Naive thymus-derived CD4-positive, alpha-beta T cell (primary cell): ENCODE measurements at regions of chr2 and their contacts with region 1.

Region 1: DNA sequence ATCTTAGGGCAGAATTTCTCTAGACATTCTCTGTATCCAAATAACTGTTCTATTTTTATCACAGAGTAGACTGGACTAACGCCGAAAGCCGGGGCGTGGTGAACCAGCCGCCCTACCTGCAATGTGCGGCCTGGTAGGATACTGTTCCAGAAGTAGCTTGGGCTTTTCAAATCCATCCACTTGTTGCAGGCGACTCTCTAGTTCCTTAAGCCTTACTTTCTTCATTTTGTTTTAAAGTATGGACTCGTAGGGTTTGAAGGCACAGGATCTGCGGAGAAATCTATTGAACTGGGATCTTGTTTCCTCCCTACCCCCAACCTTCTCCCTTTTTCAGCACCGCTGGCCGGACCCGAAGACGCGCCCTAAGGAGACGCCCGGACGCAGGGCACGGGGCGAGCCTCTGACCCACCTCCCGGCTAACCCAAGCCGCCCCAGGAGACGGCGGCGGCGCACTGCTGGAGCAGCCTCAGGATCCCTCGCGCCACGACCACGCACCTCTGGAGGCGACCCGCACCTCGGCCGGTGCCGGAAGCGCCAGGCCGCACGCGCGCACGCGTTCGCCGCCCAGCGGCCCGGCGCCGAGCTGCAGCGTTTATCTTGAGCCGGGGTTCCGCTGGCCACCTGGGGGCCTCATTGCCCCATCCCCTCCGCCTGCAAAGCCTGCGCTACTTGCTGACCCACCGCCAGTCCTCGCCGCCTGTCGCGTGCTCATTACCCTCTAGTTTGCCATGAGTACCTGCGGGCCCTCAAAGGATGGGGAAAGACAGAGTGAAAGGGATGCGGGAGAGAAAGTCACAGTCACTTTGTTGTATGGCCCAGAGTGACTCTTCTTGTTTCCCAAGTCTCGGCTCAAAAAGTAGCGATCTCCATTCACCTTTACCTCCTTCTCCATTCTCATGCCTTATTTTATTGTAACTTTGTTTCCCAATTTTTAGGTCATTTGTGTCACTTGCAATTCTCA is at the start of gene METTL5:
- DNase-seq: peak; percentile 55 to 90 (median 71)
- ATAC-seq: peak; percentile 80
- H3K4me3 ChIP-seq: peak within 1 kb of the TSS; percentile 80
- H3K4me3 Mint-ChIP-seq: peak within 1 kb of the TSS; percentile 82 to 99 (median 91)
- H3K27ac ChIP-seq: peak within 1 kb of the TSS; percentile 85
- H3K27ac Mint-ChIP-seq: peak within 1 kb of the TSS; percentile 84 to 96 (median 89)
- H3K4me1 ChIP-seq: peaks cover 19 to 28% of the 10 kb centered on the region in 2 donors
- H3K4me1 Mint-ChIP-seq: peaks cover 46 to 75% (median 65%) of the 10 kb centered on the region in 7 donors
- H3K27me3 ChIP-seq: no peaks in the 10 kb centered on the region
- H3K27me3 Mint-ChIP-seq: no peaks in the 10 kb centered on the region
- total RNA-seq, gene METTL5: 21.1 to 52.9 (median 44.2) TPM

Region 2: GRCh38 chr2:169479257-169480078 is 345.2 kb before region 1 on chr2 and contains the start of gene BBS5:
- CTCF ChIA-PET with region 1: no interaction called
- POLR2A ChIA-PET with region 1: no interaction called
- intact Hi-C with region 1: loop called in 1 of 2 experiments (anchors 2 kb)
- DNase-seq: peak; percentile 55 to 78 (median 74)
- ATAC-seq: peak; percentile 93
- H3K4me3 ChIP-seq: peak within 1 kb of the TSS; percentile 87
- H3K4me3 Mint-ChIP-seq: peak within 1 kb of the TSS; percentile 89 to 96 (median 92)
- H3K27ac ChIP-seq: peak within 1 kb of the TSS; percentile 49
- H3K27ac Mint-ChIP-seq: peak within 1 kb of the TSS; percentile 37 to 86 (median 69)
- H3K4me1 ChIP-seq: peaks cover 0 to 3% of the 10 kb centered on the region in 2 donors
- H3K4me1 Mint-ChIP-seq: peaks cover 12 to 30% (median 22%) of the 10 kb centered on the region in 7 donors
- H3K27me3 ChIP-seq: no peaks in the 10 kb centered on the region
- H3K27me3 Mint-ChIP-seq: no peaks in the 10 kb centered on the region
- total RNA-seq, gene BBS5: 2.0 to 3.8 (median 2.6) TPM

Region 3: DNA sequence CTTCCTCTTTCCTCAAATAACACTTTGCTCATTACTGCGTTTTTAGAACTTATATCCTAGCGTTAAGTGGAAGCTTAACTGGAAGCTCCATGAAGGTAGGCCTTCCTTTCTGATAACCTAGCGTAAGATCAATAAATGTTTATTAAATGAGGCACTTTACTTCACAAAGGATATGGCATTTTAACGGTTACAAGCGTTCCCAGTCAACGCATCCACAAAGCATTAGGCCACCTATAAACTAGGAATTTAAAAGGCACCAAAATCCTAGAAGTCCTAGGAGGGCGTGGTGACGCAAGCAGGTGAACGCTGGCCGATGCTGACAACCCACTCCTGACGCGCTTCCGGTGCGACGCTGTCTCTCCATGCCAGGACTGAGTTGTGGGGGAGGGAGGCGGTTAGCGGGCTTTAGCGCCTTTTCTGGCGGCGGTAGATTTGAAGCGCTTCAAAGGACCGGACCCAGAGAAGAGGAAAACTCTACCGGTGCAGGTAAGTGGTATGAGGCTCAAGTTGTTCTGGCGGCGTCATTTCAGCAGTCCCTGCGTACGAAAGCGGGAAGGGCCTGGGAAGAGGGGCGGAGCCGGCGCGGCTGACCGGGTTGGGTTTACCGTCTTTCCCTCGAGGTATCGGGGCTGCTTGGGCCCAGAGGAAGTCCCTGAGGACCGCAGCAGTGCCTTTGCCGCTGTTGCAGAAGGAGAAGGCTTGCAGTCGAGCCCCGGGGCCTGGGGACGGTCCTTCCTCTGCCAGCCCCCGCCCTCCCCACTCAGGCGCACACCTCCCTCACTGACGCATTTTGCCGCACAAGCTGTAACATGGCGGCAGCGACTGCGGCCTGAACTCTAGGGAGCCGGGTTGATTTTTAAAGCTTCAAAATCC is 240.4 kb before region 1 on chr2 and contains the start of gene PPIG:
- CTCF ChIA-PET with region 1: no interaction called
- POLR2A ChIA-PET with region 1: interaction called, 9 read pairs
- intact Hi-C with region 1: loop called (anchors 1 kb)
- DNase-seq: peak; percentile 71 to 90 (median 85)
- ATAC-seq: peak; percentile 94
- H3K4me3 ChIP-seq: peak within 1 kb of the TSS; percentile 89
- H3K4me3 Mint-ChIP-seq: peak within 1 kb of the TSS; percentile 90 to 100 (median 99)
- H3K27ac ChIP-seq: peak within 1 kb of the TSS; percentile 99
- H3K27ac Mint-ChIP-seq: peak within 1 kb of the TSS; percentile 97 to 100 (median 100)
- H3K4me1 ChIP-seq: peaks cover 17 to 29% of the 10 kb centered on the region in 2 donors
- H3K4me1 Mint-ChIP-seq: peaks cover 12 to 46% (median 40%) of the 10 kb centered on the region in 7 donors
- H3K27me3 ChIP-seq: no peaks in the 10 kb centered on the region
- H3K27me3 Mint-ChIP-seq: peaks cover 0 to 4% (median 0%) of the 10 kb centered on the region in 5 donors
- total RNA-seq, gene PPIG: 50.6 to 86.1 (median 73.7) TPM

Region 4: DNA sequence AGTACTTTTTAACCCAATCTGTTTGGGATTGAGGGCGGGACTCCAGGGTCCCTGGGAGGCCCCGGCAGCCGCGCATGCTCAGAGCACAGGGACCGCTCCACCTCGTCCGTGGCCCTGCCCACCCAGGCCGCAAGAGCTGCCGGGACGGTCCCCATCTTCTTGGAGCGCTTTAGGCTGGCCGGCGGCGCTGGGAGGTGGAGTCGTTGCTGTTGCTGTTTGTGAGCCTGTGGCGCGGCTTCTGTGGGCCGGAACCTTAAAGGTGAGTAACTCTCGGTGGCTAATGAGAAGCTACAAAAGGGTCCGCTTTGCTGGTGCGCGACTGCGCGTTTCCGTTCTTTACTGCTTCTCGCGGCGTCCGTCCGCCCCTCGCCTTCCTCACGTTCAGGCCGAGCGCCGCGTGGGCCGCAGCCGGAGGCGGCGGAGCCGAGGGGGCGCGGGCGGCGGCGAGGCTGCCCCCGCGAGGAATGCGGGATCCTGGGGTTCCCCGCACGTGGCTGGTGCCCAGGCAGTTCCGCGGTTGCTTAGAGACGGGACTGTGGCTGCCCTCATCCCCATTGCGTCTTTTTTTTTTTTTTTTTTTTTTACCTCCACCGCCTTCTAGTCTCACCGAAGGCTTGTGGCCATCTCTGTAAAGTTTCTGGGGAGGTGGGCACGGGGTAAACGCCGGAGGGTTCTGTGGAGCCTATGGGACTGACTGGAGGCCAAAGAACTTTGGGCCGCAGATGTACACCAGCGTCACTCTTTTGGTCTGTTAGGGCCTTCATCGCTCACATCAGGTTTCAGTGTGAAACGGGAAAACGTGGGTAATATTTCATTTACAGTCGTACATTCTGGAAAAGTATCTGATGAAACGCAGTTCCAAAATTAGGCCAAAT is 25.7 kb before region 1 on chr2 and contains the start of gene SSB:
- CTCF ChIA-PET with region 1: interaction called, 3 read pairs
- POLR2A ChIA-PET with region 1: interaction called, 9 read pairs
- intact Hi-C with region 1: loop called (anchors 1 kb)
- DNase-seq: peak; percentile 75 to 93 (median 83)
- ATAC-seq: peak; percentile 95
- H3K4me3 ChIP-seq: peak within 1 kb of the TSS; percentile 84
- H3K4me3 Mint-ChIP-seq: peak within 1 kb of the TSS; percentile 80 to 94 (median 90)
- H3K27ac ChIP-seq: peak within 1 kb of the TSS; percentile 95
- H3K27ac Mint-ChIP-seq: peak within 1 kb of the TSS; percentile 87 to 97 (median 94)
- H3K4me1 ChIP-seq: peaks cover 11 to 21% of the 10 kb centered on the region in 2 donors
- H3K4me1 Mint-ChIP-seq: peaks cover 10 to 50% (median 37%) of the 10 kb centered on the region in 7 donors
- H3K27me3 ChIP-seq: no peaks in the 10 kb centered on the region
- H3K27me3 Mint-ChIP-seq: peaks cover 0 to 9% (median 0%) of the 10 kb centered on the region in 5 donors
- total RNA-seq, gene SSB: 88.3 to 104 (median 102) TPM

Region 5: GRCh38 chr2:169862816-169863215 is 38.2 kb after region 1 on chr2:
- CTCF ChIA-PET with region 1: no interaction called
- POLR2A ChIA-PET with region 1: no interaction called
- intact Hi-C with region 1: no loop called
- DNase-seq: no peak
- ATAC-seq: no peak
- H3K4me3 ChIP-seq: no peak overlapping the region
- H3K4me3 Mint-ChIP-seq: no peak overlapping the region
- H3K27ac ChIP-seq: no peak overlapping the region
- H3K27ac Mint-ChIP-seq: no peak overlapping the region
- H3K4me1 ChIP-seq: no peaks in the 10 kb centered on the region
- H3K4me1 Mint-ChIP-seq: peaks cover 3 to 70% (median 50%) of the 10 kb centered on the region in 7 donors
- H3K27me3 ChIP-seq: no peaks in the 10 kb centered on the region
- H3K27me3 Mint-ChIP-seq: no peaks in the 10 kb centered on the region

Region 6: GRCh38 chr2:169933124-169933711 is 108.6 kb after region 1 on chr2:
- CTCF ChIA-PET with region 1: interaction called, 3 read pairs
- POLR2A ChIA-PET with region 1: interaction called, 4 read pairs
- intact Hi-C with region 1: loop called (anchors 1 kb)
- DNase-seq: peak in 2 of 9 donors; percentile 6 to 9
- ATAC-seq: no peak
- H3K4me3 ChIP-seq: no peak overlapping the region
- H3K4me3 Mint-ChIP-seq: no peak overlapping the region
- H3K27ac ChIP-seq: no peak overlapping the region
- H3K27ac Mint-ChIP-seq: no peak overlapping the region
- H3K4me1 ChIP-seq: no peaks in the 10 kb centered on the region
- H3K4me1 Mint-ChIP-seq: peaks cover 0 to 9% (median 0%) of the 10 kb centered on the region in 7 donors
- H3K27me3 ChIP-seq: no peaks in the 10 kb centered on the region
- H3K27me3 Mint-ChIP-seq: no peaks in the 10 kb centered on the region

Region 7: DNA sequence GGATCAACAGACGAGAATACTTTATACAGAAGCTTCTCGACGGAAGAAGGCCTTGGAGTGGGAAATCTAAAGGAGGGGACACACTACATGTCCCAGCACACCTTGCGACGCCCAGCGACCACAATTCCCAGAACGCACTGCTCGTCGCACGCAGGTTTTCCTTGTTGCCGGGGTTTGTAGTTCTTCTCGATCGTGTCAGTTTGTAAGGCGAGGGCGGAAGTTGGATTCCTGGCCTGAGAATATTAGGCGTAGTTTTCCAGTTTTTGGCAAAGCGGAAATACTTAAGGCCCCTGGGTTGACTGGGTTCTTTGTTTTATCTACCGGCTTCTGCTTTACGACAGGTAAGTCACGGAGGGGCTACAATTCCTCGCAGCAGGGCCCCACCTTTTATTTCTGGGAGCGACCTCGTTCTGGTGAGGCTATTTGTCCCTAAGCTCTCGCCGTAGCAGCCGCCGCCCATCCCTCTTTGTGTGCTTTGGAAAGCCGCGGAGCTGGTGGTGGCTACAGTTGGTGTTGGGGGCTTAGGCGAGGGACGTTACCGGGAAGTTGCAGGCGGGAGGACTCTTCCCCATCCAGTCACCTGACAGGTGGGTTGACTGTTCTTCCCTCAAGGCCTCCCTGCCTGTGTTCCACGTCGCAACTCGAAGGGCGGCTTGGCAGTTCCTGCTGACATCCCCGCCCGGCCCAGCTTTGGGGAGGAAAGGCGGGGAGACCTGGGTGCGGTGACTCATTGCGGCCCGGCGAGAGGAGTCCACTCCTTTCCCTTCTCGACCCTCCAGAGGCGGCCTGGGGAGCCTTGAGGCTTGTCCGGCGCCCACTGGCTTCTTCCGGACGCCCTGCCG is 1862.9 kb after region 1 on chr2 and contains the start of gene DYNC1I2:
- CTCF ChIA-PET with region 1: no interaction called
- POLR2A ChIA-PET with region 1: no interaction called
- intact Hi-C with region 1: loop called in 1 of 2 experiments (anchors 10 kb)
- DNase-seq: peak; percentile 38 to 82 (median 79)
- ATAC-seq: peak; percentile 90
- H3K4me3 ChIP-seq: peak within 1 kb of the TSS; percentile 96
- H3K4me3 Mint-ChIP-seq: peak within 1 kb of the TSS; percentile 89 to 98 (median 93)
- H3K27ac ChIP-seq: peak within 1 kb of the TSS; percentile 67
- H3K27ac Mint-ChIP-seq: peak within 1 kb of the TSS; percentile 77 to 95 (median 85)
- H3K4me1 ChIP-seq: peaks cover 7 to 10% of the 10 kb centered on the region in 2 donors
- H3K4me1 Mint-ChIP-seq: peaks cover 11 to 43% (median 24%) of the 10 kb centered on the region in 7 donors
- H3K27me3 ChIP-seq: no peaks in the 10 kb centered on the region
- H3K27me3 Mint-ChIP-seq: peaks cover 0 to 21% (median 0%) of the 10 kb centered on the region in 5 donors
- total RNA-seq, gene DYNC1I2: 21.5 to 57.0 (median 41.7) TPM